ENCODE measurements at regions of chr20 and their contacts with region 1.

Region 1: GRCh38 chr20:44187051-44187762 is at the start of gene JPH2:
- DNase-seq: peak; percentile 83
- H3K4me3 ChIP-seq: peak within 1 kb of the TSS; percentile 52 to 60 (median 55)
- H3K27ac ChIP-seq: peak within 1 kb of the TSS; percentile 87
- H3K4me1 ChIP-seq: peaks cover 45% of the 10 kb centered on the region
- H3K27me3 ChIP-seq: no peaks in the 10 kb centered on the region
- CTCF ChIP-seq: no peak
- total RNA-seq, gene JPH2: 5.5 to 14.2 TPM

Region 2: GRCh38 chr20:43456809-43457639 is 730.2 kb before region 1 on chr20:
- CTCF ChIA-PET with region 1: no interaction called
- dilution Hi-C with region 1: no loop called
- in situ Hi-C with region 1: no loop called
- intact Hi-C with region 1: loop called (anchors 5 kb)
- DNase-seq: peak; percentile 88
- H3K4me3 ChIP-seq: peak overlapping the region; percentile 68 to 98 (median 71)
- H3K27ac ChIP-seq: peak overlapping the region; percentile 96
- H3K4me1 ChIP-seq: peaks cover 12% of the 10 kb centered on the region
- H3K27me3 ChIP-seq: no peaks in the 10 kb centered on the region
- CTCF ChIP-seq: no peak

Region 3: DNA sequence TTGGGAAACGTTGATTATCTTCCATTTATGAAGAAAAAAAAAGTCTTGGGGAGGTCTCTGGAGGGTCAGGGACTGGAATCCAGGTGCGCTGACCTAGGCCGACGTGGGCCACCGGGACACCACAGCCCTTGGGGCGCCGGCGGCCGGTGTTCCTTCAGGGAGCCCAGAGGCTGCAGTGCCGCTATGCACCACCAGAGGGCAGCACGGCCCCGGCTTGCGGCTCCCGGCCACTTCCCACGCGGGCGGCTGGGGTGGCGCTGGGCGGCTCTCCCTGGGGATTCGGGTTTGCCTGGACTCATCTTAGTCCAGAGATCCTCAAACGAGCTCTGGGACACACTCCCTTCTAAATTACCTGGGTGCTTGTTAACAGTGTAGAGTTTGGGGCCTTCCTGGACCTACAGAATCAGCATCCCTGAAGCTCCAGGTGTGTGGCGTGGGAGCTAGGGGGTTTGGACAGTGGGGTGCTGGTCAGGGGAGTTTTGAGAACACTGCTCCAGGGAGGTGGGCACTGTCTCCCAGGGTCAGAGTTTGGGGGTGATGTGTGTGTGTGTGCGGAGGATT is 437.4 kb before region 1 on chr20:
- CTCF ChIA-PET with region 1: no interaction called
- dilution Hi-C with region 1: no loop called
- in situ Hi-C with region 1: no loop called
- intact Hi-C with region 1: loop called (anchors 5 kb)
- DNase-seq: peak; percentile 57
- H3K4me3 ChIP-seq: no peak overlapping the region
- H3K27ac ChIP-seq: no peak overlapping the region
- H3K4me1 ChIP-seq: peaks cover 22% of the 10 kb centered on the region
- H3K27me3 ChIP-seq: no peaks in the 10 kb centered on the region
- CTCF ChIP-seq: peak; percentile 85 to 99

Region 4: GRCh38 chr20:43776643-43777042 is 410.6 kb before region 1 on chr20:
- CTCF ChIA-PET with region 1: no interaction called
- dilution Hi-C with region 1: no loop called
- in situ Hi-C with region 1: no loop called
- intact Hi-C with region 1: no loop called
- DNase-seq: no peak
- H3K4me3 ChIP-seq: no peak overlapping the region
- H3K27ac ChIP-seq: no peak overlapping the region
- H3K4me1 ChIP-seq: peaks cover under 1% of the 10 kb centered on the region
- H3K27me3 ChIP-seq: no peaks in the 10 kb centered on the region
- CTCF ChIP-seq: no peak

Region 5: GRCh38 chr20:44115762-44116644 is 71.2 kb before region 1 on chr20:
- CTCF ChIA-PET with region 1: interaction called, 26 read pairs
- dilution Hi-C with region 1: no loop called
- in situ Hi-C with region 1: loop called (anchors 5 kb)
- intact Hi-C with region 1: loop called (anchors 1 kb)
- DNase-seq: no peak
- H3K4me3 ChIP-seq: no peak overlapping the region
- H3K27ac ChIP-seq: no peak overlapping the region
- H3K4me1 ChIP-seq: peaks cover 11% of the 10 kb centered on the region
- H3K27me3 ChIP-seq: no peaks in the 10 kb centered on the region
- CTCF ChIP-seq: no peak

Region 6: GRCh38 chr20:44153636-44154043 is 33.6 kb before region 1 on chr20:
- CTCF ChIA-PET with region 1: interaction called, 3 read pairs
- dilution Hi-C with region 1: no loop called
- in situ Hi-C with region 1: no loop called
- intact Hi-C with region 1: loop called (anchors 1 kb)
- DNase-seq: peak; percentile 33
- H3K4me3 ChIP-seq: no peak overlapping the region
- H3K27ac ChIP-seq: peak overlapping the region; percentile 70
- H3K4me1 ChIP-seq: peaks cover 43% of the 10 kb centered on the region
- H3K27me3 ChIP-seq: no peaks in the 10 kb centered on the region
- CTCF ChIP-seq: no peak

Region 7: DNA sequence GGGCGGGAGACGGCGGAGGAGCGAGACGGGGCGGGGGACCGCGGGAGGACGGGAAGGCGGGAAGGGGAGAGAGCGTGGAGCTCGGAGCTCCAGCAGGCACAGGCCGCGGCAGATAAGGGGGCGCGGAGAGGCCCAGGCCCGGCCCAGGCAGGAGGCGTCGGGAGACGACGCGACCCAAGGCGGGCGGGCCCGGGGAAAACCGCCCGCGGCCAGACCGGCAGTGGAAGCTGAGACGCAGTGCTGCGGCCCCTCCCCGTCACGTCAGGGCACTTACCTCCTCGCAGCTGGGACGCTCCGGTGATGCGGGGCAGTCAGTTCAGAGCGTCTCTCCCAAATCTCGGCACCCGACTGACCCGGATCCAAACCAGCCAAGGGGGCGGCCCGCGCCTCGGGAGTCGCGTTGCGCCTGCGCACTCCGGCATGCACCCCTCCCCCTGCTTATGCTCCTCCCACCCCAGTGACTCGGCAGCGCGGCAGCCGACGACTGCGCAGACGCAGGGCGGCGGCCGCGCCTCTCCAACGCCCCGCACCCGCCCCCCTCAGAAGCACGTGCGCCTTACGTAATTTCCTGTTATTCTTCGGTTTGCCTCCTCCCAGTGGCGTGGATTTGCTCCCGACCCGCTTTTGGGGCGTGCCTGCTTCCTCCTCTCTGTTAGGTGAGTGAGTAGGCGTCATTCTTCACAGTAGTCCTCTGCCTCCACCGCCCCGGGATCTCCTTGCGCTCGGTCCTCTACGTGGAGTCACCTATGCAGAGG is 23.4 kb after region 1 on chr20 and contains the start of gene OSER1:
- CTCF ChIA-PET with region 1: no interaction called
- dilution Hi-C with region 1: no loop called
- in situ Hi-C with region 1: no loop called
- intact Hi-C with region 1: loop called (anchors 2 kb)
- DNase-seq: peak; percentile 98
- H3K4me3 ChIP-seq: peak within 1 kb of the TSS; percentile 76 to 99 (median 97)
- H3K27ac ChIP-seq: peak within 1 kb of the TSS; percentile 97
- H3K4me1 ChIP-seq: peaks cover 39% of the 10 kb centered on the region
- H3K27me3 ChIP-seq: no peaks in the 10 kb centered on the region
- CTCF ChIP-seq: no peak
- total RNA-seq, gene OSER1: 18.5 to 29.5 TPM

Measured in mammary epithelial cell (primary cell).